BJ (cell line): ENCODE measurements at regions of chr7 and their contacts with region 1.

Region 1: GRCh38 chr7:95545078-95545498 is 51.2 kb downstream of the PDK4 start:
- DNase-seq: peak; percentile 14
- H3K4me3 ChIP-seq: peak overlapping the region; percentile 13
- H3K27me3 ChIP-seq: peaks cover 5% of the 10 kb centered on the region
- CTCF ChIP-seq: peak; percentile 88

Region 2: GRCh38 chr7:95558864-95559263 is 13.8 kb after region 1 on chr7:
- CTCF ChIA-PET with region 1: interaction called, 14 read pairs
- POLR2A ChIA-PET with region 1: no interaction called
- DNase-seq: no peak
- H3K4me3 ChIP-seq: no peak overlapping the region
- H3K27me3 ChIP-seq: no peaks in the 10 kb centered on the region
- CTCF ChIP-seq: no peak

Region 3: GRCh38 chr7:95684037-95684436 is 138.9 kb after region 1 on chr7:
- CTCF ChIA-PET with region 1: interaction called, 591 read pairs
- POLR2A ChIA-PET with region 1: interaction called, 11 read pairs
- DNase-seq: no peak
- H3K4me3 ChIP-seq: no peak overlapping the region
- H3K27me3 ChIP-seq: peaks cover 2% of the 10 kb centered on the region; the same call in 1 of the 2 replicates
- CTCF ChIP-seq: peak; percentile 53